Naive thymus-derived CD4-positive, alpha-beta T cell (primary cell): ENCODE measurements at regions of chr1 and their contacts with region 1.

Region 1: DNA sequence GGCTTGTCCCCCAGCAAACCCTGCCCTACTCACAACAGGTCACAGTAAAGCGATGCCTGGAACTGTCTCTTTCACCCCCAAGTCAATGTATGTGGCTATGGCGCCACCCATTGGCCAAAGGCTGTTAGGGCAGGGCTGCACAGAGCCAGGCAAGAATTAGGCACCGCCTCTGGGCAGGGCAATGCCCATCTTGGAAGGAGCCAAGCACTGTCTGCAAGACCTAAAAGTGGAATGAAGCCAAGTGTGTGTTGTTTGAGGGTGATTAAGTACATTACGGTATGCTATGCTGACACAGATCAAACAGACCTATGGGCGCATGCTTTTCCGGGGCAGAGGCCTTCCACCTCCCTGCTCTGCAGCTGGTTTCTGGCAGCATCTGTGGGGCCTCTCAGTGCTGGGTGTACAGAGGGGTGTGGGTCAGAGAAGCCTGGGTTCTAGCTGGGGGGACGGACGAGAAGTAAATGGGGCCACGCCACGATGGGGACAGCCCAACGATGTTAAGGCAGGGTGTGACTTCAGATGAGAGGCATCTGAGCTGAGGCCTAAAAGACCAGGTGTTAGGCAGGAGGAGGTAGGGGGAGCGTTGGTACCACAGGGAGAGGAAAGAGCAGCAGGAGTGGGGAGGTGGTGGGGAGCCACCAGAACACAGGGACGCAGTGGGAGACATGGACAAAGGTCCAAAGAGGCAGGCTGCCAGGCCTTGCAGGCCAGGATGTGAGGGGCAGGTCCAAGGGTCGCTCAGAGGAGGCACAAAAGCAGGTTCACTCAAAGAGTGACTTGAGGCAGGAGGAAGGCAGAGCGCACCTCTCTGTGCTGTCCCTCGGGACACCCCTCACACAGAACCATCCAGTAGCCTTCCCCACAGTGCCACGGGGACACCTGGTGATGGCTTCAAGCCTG is 49.8 kb downstream of the ACOT7 start:
- DNase-seq: peak; percentile 19 to 67 (median 49)
- ATAC-seq: peak; percentile 73
- H3K4me3 ChIP-seq: no peak overlapping the region
- H3K4me3 Mint-ChIP-seq: no peak overlapping the region
- H3K27ac ChIP-seq: no peak overlapping the region
- H3K27ac Mint-ChIP-seq: peak overlapping the region in 1 of 9 donors; percentile 25
- H3K4me1 ChIP-seq: peaks cover 12 to 13% of the 10 kb centered on the region in 2 donors
- H3K4me1 Mint-ChIP-seq: peaks cover 9 to 24% (median 11%) of the 10 kb centered on the region in 7 donors
- H3K27me3 ChIP-seq: no peaks in the 10 kb centered on the region
- H3K27me3 Mint-ChIP-seq: no peaks in the 10 kb centered on the region

Region 2: GRCh38 chr1:6329851-6330250 is 13.9 kb before region 1 on chr1:
- CTCF ChIA-PET with region 1: no interaction called
- POLR2A ChIA-PET with region 1: no interaction called
- intact Hi-C with region 1: no loop called
- DNase-seq: no peak
- ATAC-seq: no peak
- H3K4me3 ChIP-seq: no peak overlapping the region
- H3K4me3 Mint-ChIP-seq: no peak overlapping the region
- H3K27ac ChIP-seq: no peak overlapping the region
- H3K27ac Mint-ChIP-seq: no peak overlapping the region
- H3K4me1 ChIP-seq: no peaks in the 10 kb centered on the region
- H3K4me1 Mint-ChIP-seq: no peaks in the 10 kb centered on the region
- H3K27me3 ChIP-seq: no peaks in the 10 kb centered on the region
- H3K27me3 Mint-ChIP-seq: no peaks in the 10 kb centered on the region

Region 3: GRCh38 chr1:6359216-6360116 is 15.7 kb after region 1 on chr1:
- CTCF ChIA-PET with region 1: interaction called, 5 read pairs
- POLR2A ChIA-PET with region 1: interaction called, 6 read pairs
- intact Hi-C with region 1: loop called (anchors 1 kb)
- DNase-seq: peak in 7 of 9 donors; percentile 31 to 62 (median 34)
- ATAC-seq: peak; percentile 66
- H3K4me3 ChIP-seq: peak overlapping the region; percentile 57
- H3K4me3 Mint-ChIP-seq: peak overlapping the region; percentile 52 to 83 (median 73)
- H3K27ac ChIP-seq: peak overlapping the region; percentile 65
- H3K27ac Mint-ChIP-seq: peak overlapping the region; percentile 82 to 96 (median 89)
- H3K4me1 ChIP-seq: peaks cover 28 to 41% of the 10 kb centered on the region in 2 donors
- H3K4me1 Mint-ChIP-seq: peaks cover 12 to 66% (median 55%) of the 10 kb centered on the region in 7 donors
- H3K27me3 ChIP-seq: no peaks in the 10 kb centered on the region
- H3K27me3 Mint-ChIP-seq: no peaks in the 10 kb centered on the region

Region 4: DNA sequence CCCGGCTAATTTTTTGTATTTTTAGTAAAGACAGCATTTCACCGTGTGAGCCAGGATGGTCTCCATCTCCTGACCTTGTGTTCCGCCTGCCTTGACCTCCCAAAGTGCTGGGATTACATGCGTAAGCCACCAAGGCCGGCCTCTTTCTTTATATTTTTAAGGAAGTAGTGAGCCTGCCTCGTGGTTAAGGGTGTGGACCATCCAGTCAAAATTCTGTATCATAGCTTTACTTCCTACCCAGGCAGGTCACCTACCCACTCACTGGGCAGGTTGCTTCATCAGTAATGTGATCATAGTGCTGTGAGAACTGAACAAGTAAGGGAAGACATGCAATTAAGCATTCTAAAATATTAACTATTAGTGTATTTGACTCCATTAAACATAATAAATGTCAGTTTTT is 57.9 kb after region 1 on chr1:
- CTCF ChIA-PET with region 1: interaction called, 53 read pairs
- POLR2A ChIA-PET with region 1: interaction called, 4 read pairs
- intact Hi-C with region 1: loop called (anchors 1 kb)
- DNase-seq: no peak
- ATAC-seq: peak; percentile 77
- H3K4me3 ChIP-seq: no peak overlapping the region
- H3K4me3 Mint-ChIP-seq: no peak overlapping the region
- H3K27ac ChIP-seq: no peak overlapping the region
- H3K27ac Mint-ChIP-seq: no peak overlapping the region
- H3K4me1 ChIP-seq: no peaks in the 10 kb centered on the region
- H3K4me1 Mint-ChIP-seq: peaks cover 5 to 20% (median 5%) of the 10 kb centered on the region in 7 donors
- H3K27me3 ChIP-seq: no peaks in the 10 kb centered on the region
- H3K27me3 Mint-ChIP-seq: peaks cover 0 to 35% (median 0%) of the 10 kb centered on the region in 5 donors

Region 5: DNA sequence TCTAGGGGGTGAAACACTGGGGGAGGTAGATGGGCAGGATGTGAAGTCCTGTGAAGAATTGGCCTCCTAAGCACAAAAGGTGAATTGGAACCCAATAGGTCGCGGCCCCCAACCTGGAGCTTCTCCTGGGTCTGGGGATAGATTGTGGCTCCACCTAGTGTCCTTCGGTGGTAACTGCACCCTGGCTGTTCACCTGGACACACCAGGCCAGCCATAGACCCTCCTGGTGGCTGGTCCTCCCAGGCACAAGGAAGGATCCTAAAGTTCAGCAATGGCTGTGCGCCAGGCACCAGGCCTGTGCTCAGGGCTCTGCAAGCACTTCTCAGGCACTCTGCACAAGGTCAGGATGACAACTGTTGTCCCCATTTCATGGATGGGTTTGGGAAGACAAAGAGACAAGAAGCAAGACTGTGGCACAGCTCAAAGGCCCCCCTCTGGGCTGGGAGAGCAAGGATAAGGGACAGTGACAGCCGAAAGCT is 94.3 kb after region 1 on chr1:
- CTCF ChIA-PET with region 1: interaction called, 12 read pairs
- POLR2A ChIA-PET with region 1: no interaction called
- intact Hi-C with region 1: loop called (anchors 1 to 2 kb)
- DNase-seq: peak; percentile 55 to 79 (median 66)
- ATAC-seq: peak; percentile 74
- H3K4me3 ChIP-seq: no peak overlapping the region
- H3K4me3 Mint-ChIP-seq: peak overlapping the region in 4 of 10 donors; percentile 4 to 58 (median 22)
- H3K27ac ChIP-seq: no peak overlapping the region
- H3K27ac Mint-ChIP-seq: peak overlapping the region in 3 of 9 donors; percentile 38 to 74 (median 67)
- H3K4me1 ChIP-seq: no peaks in the 10 kb centered on the region
- H3K4me1 Mint-ChIP-seq: peaks cover 0 to 14% (median 9%) of the 10 kb centered on the region in 7 donors
- H3K27me3 ChIP-seq: peaks cover 0 to 9% of the 10 kb centered on the region in 2 donors
- H3K27me3 Mint-ChIP-seq: peaks cover 18 to 48% (median 20%) of the 10 kb centered on the region in 5 donors